ENCODE measurements at regions of chr4 and their contacts with region 1.

Region 1: GRCh38 chr4:10403633-10404445 is 53.4 kb downstream of the ZNF518B start:
- DNase-seq: peak; percentile 5
- H3K4me3 ChIP-seq: no peak overlapping the region
- H3K27me3 ChIP-seq: no peaks in the 10 kb centered on the region
- CTCF ChIP-seq: peak; percentile 48

Region 2: DNA sequence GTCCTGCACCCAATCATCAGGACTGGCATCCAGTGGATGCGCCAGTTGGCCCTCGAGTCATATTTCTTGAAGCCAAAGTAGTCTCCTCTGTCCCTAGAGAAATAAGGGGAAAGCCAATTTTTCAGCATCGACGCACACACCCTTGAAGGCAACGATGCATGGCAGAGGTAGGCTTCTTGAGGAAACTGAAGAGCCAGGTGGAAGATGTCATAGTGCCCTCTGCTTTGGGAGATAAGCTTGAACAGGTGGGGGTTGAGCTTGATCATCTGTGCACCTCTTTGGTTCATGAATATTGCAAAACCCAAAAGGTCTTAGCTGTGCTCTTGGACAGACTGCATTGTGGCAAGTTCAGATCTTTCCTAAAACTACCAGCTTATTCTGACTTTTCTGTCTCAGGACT is 252.7 kb before region 1 on chr4:
- CTCF ChIA-PET with region 1: interaction called, 12 read pairs
- POLR2A ChIA-PET with region 1: no interaction called
- DNase-seq: no peak
- H3K4me3 ChIP-seq: no peak overlapping the region
- H3K27me3 ChIP-seq: peaks cover 8% of the 10 kb centered on the region
- CTCF ChIP-seq: no peak

Region 3: DNA sequence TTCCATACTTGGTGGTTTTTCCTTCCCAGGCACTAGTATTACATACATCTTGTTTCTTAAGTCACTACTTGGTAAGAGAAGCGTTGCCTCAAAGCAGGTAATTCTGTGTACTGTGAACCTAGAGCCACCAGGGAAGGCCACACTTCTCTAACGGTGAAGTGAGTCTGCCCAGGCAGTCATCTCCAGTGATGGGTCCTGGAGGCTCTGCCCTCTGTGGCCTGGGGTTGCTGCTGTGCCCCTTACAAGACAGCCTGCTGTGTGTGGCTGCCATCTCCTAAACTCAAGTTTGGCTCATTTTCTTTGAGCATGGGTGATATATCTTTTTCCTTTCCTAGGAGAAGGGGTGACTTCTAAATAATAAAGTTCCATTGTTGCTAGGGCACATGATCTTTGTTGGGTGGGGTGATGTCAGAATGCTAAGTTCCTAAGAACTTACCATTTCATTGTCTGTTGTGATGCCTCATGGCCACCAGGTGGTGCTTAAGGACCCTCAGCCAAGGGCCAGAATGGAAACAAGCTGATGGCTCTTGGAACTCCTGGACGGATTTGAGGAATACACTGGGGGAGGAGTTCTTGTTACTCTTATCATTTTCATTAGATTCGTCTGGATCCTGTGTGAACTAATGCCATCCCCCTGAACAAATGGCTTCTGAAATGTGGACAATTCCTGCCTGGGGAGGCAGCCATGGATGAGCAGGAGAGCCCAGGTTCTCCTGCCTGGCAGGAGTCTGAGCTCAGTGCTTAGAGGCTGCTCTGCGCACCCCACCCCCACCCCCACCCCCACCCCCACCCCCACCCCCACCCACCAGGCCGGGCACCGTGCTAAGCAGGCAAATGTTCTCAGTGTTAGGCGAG is 246.1 kb before region 1 on chr4:
- CTCF ChIA-PET with region 1: interaction called, 309 read pairs
- POLR2A ChIA-PET with region 1: no interaction called
- DNase-seq: no peak
- H3K4me3 ChIP-seq: no peak overlapping the region
- H3K27me3 ChIP-seq: peaks cover 11% of the 10 kb centered on the region
- CTCF ChIP-seq: peak; percentile 84

Region 4: GRCh38 chr4:10173037-10173753 is 230.6 kb before region 1 on chr4:
- CTCF ChIA-PET with region 1: interaction called, 67 read pairs
- POLR2A ChIA-PET with region 1: interaction called, 3 read pairs
- DNase-seq: no peak
- H3K4me3 ChIP-seq: no peak overlapping the region
- H3K27me3 ChIP-seq: no peaks in the 10 kb centered on the region
- CTCF ChIP-seq: no peak

Region 5: GRCh38 chr4:10192331-10192730 is 211.5 kb before region 1 on chr4:
- CTCF ChIA-PET with region 1: interaction called, 11 read pairs
- POLR2A ChIA-PET with region 1: no interaction called
- DNase-seq: no peak
- H3K4me3 ChIP-seq: no peak overlapping the region
- H3K27me3 ChIP-seq: no peaks in the 10 kb centered on the region
- CTCF ChIP-seq: no peak

Region 6: GRCh38 chr4:10535912-10536311 is 132.1 kb after region 1 on chr4:
- CTCF ChIA-PET with region 1: interaction called, 10 read pairs
- POLR2A ChIA-PET with region 1: no interaction called
- DNase-seq: no peak
- H3K4me3 ChIP-seq: no peak overlapping the region
- H3K27me3 ChIP-seq: peaks cover 3% of the 10 kb centered on the region; the same call in 1 of the 2 replicates
- CTCF ChIP-seq: no peak

Measured in BJ (cell line).